ENCODE measurements at regions of chr6 and their contacts with region 1.

Region 1: DNA sequence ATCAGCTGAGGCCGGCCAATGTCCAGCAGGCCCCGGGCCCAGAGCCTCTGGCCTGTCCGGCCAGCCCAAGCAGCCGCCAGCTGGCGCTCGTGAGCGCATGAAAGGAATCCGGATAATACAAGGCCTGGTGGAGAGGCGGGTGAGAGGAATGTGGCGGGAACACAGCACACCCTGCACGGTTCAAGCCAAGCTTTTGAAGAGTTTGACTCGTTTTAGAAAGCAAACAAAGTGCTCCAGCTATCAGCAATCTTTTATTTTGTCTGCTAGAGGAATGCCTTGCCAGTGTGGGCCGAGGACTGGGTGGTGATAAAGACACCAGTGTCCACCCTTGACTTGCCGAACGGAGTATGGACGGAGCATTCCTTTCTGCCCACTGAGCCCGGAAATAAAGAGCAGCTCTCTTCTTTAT is 9.3 kb upstream of the NEDD9 start:
- DNase-seq: no peak
- H3K4me3 ChIP-seq: no peak overlapping the region
- H3K4me3 Mint-ChIP-seq: no peak overlapping the region
- H3K27ac ChIP-seq: no peak overlapping the region
- H3K27ac Mint-ChIP-seq: no peak overlapping the region
- H3K4me1 ChIP-seq: peaks cover 2 to 5% of the 10 kb centered on the region in 2 donors
- H3K4me1 Mint-ChIP-seq: peaks cover 5% of the 10 kb centered on the region
- H3K27me3 ChIP-seq: no peaks in the 10 kb centered on the region
- H3K27me3 Mint-ChIP-seq: peaks cover 0 to 2% (median under 1%) of the 10 kb centered on the region in 3 donors
- CTCF ChIP-seq: no peak

Region 2: GRCh38 chr6:11298651-11299420 is 57.0 kb after region 1 on chr6:
- intact Hi-C with region 1: loop called in 1 of 2 experiments (anchors 10 kb)
- DNase-seq: no peak
- H3K4me3 ChIP-seq: no peak overlapping the region
- H3K4me3 Mint-ChIP-seq: no peak overlapping the region
- H3K27ac ChIP-seq: no peak overlapping the region
- H3K27ac Mint-ChIP-seq: no peak overlapping the region
- H3K4me1 ChIP-seq: no peaks in the 10 kb centered on the region
- H3K4me1 Mint-ChIP-seq: peaks cover 11% of the 10 kb centered on the region
- H3K27me3 ChIP-seq: no peaks in the 10 kb centered on the region
- H3K27me3 Mint-ChIP-seq: no peaks in the 10 kb centered on the region
- CTCF ChIP-seq: no peak

Region 3: DNA sequence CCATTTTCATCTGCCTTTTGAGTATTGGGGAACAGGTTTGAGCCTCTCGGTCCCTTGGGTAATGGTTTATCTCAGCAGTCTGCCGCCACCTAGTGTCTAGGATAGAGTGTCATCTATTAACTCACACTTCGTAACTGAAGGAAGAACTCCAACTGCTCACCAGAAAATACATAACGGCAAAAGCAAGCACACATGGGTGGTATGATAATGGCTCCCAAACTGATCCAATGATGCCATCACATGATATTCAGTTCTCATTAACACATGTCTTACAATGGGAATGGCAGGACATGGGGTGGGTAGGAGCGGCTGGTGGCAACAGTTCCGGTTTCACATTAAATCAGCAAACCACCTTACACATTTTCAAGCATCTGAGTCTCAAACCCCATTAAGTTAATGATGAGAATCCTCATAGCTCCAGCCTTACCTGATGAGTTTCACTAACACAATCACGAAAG is 1364.1 kb after region 1 on chr6:
- intact Hi-C with region 1: no loop called
- DNase-seq: peak; percentile 53 to 73 (median 73)
- H3K4me3 ChIP-seq: peak overlapping the region in 1 of 3 experiments; percentile 55
- H3K4me3 Mint-ChIP-seq: peak overlapping the region; percentile 52 to 75
- H3K27ac ChIP-seq: no peak overlapping the region
- H3K27ac Mint-ChIP-seq: peak overlapping the region in 1 of 7 donors; percentile 32
- H3K4me1 ChIP-seq: peaks cover 14 to 25% of the 10 kb centered on the region in 2 donors
- H3K4me1 Mint-ChIP-seq: peaks cover 32% of the 10 kb centered on the region
- H3K27me3 ChIP-seq: no peaks in the 10 kb centered on the region
- H3K27me3 Mint-ChIP-seq: no peaks in the 10 kb centered on the region
- CTCF ChIP-seq: peak; percentile 79

Measured in CD14-positive monocyte (primary cell).